Activated CD8-positive, alpha-beta T cell treated with anti-CD3 and anti-CD28 coated beads for 36 hours (primary cell): ENCODE measurements at regions of chr16 and their contacts with region 1.

Region 1: GRCh38 chr16:89700100-89700648 is 1.3 kb downstream of the SPATA2L start:
- DNase-seq: peak; percentile 98
- ATAC-seq: peak; percentile 17
- H3K4me3 Mint-ChIP-seq: peak overlapping the region; percentile 67
- H3K27ac Mint-ChIP-seq: peak overlapping the region; percentile 25
- H3K4me1 Mint-ChIP-seq: peaks cover 27% of the 10 kb centered on the region
- H3K27me3 Mint-ChIP-seq: no peaks in the 10 kb centered on the region
- CTCF ChIP-seq: peak; percentile 88

Region 2: DNA sequence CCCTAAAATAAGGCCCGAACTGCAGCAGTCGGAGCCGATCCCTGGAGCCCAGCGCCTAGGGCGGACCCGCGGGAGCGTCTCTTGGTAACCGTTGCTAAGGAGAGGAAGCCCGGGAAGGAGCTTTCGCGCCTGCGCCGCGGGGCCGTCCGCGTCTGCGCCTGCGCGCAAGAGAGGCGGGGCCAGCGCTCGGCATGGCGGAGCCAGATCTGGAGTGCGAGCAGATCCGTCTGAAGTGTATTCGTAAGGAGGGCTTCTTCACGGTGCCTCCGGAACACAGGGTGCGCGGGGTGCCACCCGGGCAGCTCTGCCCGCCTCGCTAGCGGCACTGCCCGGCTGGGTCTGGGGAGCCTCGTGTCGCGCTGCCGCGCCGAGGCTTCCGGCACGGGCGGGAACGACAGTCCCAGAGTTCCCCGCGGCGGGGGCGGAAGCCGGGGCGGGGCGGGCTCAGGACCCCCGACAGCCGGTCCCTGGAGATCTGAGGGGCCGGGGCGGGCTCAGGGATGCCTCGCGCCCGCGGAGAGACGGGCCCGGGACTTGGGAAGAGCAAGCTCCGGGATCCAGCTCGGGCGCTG is 13.6 kb before region 1 on chr16 and contains the start of gene CDK10:
- CTCF ChIA-PET with region 1: interaction called, 23 read pairs
- POLR2A ChIA-PET with region 1: interaction called, 21 read pairs
- intact Hi-C with region 1: no loop called
- DNase-seq: peak; percentile 89
- ATAC-seq: peak; percentile 89
- H3K4me3 Mint-ChIP-seq: peak within 1 kb of the TSS; percentile 87
- H3K27ac Mint-ChIP-seq: peak within 1 kb of the TSS; percentile 93
- H3K4me1 Mint-ChIP-seq: peaks cover 13% of the 10 kb centered on the region
- H3K27me3 Mint-ChIP-seq: no peaks in the 10 kb centered on the region
- CTCF ChIP-seq: no peak
- total RNA-seq, gene CDK10: 85.8 to 98.6 TPM

Region 3: DNA sequence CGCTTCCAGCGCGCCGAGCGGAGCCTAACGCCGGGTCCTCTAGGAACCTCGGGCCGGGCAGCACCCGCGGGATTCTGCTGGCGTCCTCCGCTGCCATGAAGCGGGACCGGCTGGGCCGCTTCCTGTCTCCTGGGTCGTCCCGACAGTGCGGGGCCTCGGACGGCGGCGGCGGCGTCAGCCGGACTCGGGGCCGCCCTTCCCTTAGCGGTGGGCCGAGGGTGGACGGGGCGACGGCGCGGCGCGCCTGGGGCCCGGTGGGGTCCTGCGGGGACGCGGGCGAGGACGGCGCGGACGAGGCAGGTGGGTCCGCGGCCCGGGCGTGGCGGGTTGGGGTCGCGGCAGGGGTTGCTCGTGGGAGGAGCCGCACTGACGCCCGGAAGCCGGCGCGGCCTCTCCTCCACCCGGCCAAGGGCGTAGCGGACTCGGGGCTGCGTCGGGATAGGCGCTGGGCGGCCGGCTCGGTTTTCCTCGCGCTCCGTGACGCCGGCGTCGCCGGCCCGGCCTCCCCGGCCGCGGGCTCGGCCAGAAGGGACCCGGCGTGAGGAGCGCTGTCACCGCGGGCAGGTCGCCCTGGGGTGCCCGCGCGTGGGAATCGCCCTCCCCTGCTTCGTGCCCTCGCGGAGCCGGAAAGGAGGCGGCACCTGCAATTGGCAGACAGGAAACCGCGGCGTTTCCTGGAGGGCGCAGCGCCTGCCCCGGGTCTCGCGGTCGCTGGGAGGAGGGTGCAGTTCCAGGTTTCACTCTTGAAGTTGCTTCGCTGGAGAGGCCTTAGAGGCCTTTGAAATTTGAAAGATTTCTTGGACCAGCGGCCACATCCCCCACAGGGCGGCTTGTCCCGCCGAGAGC is 21.6 kb after region 1 on chr16:
- CTCF ChIA-PET with region 1: interaction called, 23 read pairs
- POLR2A ChIA-PET with region 1: interaction called, 10 read pairs
- intact Hi-C with region 1: no loop called
- DNase-seq: peak; percentile 85
- ATAC-seq: peak; percentile 17
- H3K4me3 Mint-ChIP-seq: peak overlapping the region; percentile 82
- H3K27ac Mint-ChIP-seq: peak overlapping the region; percentile 86
- H3K4me1 Mint-ChIP-seq: peaks cover 44% of the 10 kb centered on the region
- H3K27me3 Mint-ChIP-seq: no peaks in the 10 kb centered on the region
- CTCF ChIP-seq: no peak

Region 4: GRCh38 chr16:89791278-89791995 is 91.3 kb after region 1 on chr16:
- CTCF ChIA-PET with region 1: interaction called, 58 read pairs
- POLR2A ChIA-PET with region 1: interaction called, 4 read pairs
- intact Hi-C with region 1: loop called (anchors 10 kb)
- DNase-seq: no peak
- ATAC-seq: no peak
- H3K4me3 Mint-ChIP-seq: no peak overlapping the region
- H3K27ac Mint-ChIP-seq: no peak overlapping the region
- H3K4me1 Mint-ChIP-seq: peaks cover 12% of the 10 kb centered on the region
- H3K27me3 Mint-ChIP-seq: no peaks in the 10 kb centered on the region
- CTCF ChIP-seq: no peak

Region 5: DNA sequence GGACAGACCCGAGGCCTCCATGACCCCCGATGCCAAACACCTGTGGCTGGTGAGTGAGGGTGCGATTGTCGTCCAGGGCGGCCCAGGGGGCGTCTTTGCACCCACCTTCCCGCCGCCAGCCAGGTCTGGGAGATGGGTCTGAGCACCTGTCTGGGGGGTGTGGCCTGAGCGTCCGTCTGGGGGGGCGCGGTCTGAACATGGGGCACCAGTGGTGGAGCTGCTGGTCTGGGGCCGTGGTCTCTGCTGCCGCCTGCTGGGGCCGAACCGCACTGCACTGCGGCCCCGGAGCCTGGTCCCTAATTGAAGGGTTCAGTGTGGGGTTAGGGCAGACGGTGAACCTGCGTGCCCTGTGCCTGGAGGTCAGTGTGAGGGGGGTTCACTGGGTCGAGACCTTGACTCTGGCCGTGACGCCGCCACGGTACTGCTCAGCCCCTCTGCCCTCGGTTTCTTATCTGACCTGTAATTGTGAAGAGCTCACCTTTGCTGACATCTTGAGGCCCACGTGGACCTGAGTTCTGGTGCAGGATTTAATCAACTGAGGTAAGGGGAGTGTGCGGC is 160.7 kb after region 1 on chr16:
- CTCF ChIA-PET with region 1: interaction called, 46 read pairs
- POLR2A ChIA-PET with region 1: no interaction called
- intact Hi-C with region 1: no loop called
- DNase-seq: peak; percentile 85
- ATAC-seq: peak; percentile 94
- H3K4me3 Mint-ChIP-seq: no peak overlapping the region
- H3K27ac Mint-ChIP-seq: no peak overlapping the region
- H3K4me1 Mint-ChIP-seq: peaks cover 31% of the 10 kb centered on the region
- H3K27me3 Mint-ChIP-seq: no peaks in the 10 kb centered on the region
- CTCF ChIP-seq: peak; percentile 99